WTC11 (cell line): ENCODE measurements at regions of chr2 and their contacts with region 1.

Region 1: GRCh38 chr2:27024188-27024587 is 8.6 kb upstream of the TMEM214 start:
- DNase-seq: peak; percentile 87
- ATAC-seq: peak; percentile 83
- H3K4me3 Mint-ChIP-seq: no peak overlapping the region
- H3K27ac Mint-ChIP-seq: no peak overlapping the region
- H3K4me1 Mint-ChIP-seq: peaks cover 6% of the 10 kb centered on the region
- H3K27me3 Mint-ChIP-seq: no peaks in the 10 kb centered on the region
- CTCF ChIP-seq: peak; percentile 44; the same call in 1 of the 2 replicates

Region 2: GRCh38 chr2:26757873-26758789 is 266.1 kb before region 1 on chr2:
- CTCF ChIA-PET with region 1: no interaction called
- POLR2A ChIA-PET with region 1: no interaction called
- DNase-seq: peak; percentile 36
- ATAC-seq: peak; percentile 50
- H3K4me3 Mint-ChIP-seq: no peak overlapping the region
- H3K27ac Mint-ChIP-seq: peak overlapping the region; percentile 25
- H3K4me1 Mint-ChIP-seq: peaks cover 39% of the 10 kb centered on the region
- H3K27me3 Mint-ChIP-seq: peaks cover 28% of the 10 kb centered on the region
- CTCF ChIP-seq: no peak

Region 3: DNA sequence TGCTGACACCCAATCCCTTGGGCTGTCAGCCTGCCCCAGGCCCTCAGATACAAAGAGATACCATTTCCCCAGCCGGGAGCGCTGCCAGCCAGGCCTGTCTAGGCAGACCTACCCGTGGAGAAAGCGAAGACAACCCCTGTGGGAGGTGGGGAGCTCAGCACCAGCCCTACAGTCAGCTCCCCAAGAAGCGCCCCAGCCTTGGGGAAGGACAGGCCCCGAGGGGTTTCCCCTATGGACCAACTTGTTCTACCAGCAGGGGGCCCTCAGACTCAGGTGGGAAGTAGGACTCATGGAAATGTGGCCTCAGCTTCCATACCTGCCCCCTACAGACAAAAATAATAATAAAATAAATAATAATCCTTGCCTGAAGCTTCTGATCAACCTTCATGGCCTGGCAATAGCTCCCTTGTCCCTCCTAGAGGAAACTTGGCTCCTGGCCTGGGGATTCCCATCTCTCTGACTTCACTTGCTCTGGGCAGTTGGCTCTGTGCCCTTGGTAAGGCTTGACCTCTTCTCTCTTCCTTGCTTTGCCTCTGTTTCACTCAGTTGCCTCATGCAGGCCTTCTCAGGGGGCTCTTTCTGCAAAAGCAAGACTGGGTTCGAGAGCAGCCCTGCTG is 253.1 kb before region 1 on chr2:
- CTCF ChIA-PET with region 1: no interaction called
- POLR2A ChIA-PET with region 1: no interaction called
- DNase-seq: peak; percentile 44
- ATAC-seq: peak; percentile 38
- H3K4me3 Mint-ChIP-seq: no peak overlapping the region
- H3K27ac Mint-ChIP-seq: no peak overlapping the region
- H3K4me1 Mint-ChIP-seq: no peaks in the 10 kb centered on the region
- H3K27me3 Mint-ChIP-seq: no peaks in the 10 kb centered on the region
- CTCF ChIP-seq: no peak

Region 4: DNA sequence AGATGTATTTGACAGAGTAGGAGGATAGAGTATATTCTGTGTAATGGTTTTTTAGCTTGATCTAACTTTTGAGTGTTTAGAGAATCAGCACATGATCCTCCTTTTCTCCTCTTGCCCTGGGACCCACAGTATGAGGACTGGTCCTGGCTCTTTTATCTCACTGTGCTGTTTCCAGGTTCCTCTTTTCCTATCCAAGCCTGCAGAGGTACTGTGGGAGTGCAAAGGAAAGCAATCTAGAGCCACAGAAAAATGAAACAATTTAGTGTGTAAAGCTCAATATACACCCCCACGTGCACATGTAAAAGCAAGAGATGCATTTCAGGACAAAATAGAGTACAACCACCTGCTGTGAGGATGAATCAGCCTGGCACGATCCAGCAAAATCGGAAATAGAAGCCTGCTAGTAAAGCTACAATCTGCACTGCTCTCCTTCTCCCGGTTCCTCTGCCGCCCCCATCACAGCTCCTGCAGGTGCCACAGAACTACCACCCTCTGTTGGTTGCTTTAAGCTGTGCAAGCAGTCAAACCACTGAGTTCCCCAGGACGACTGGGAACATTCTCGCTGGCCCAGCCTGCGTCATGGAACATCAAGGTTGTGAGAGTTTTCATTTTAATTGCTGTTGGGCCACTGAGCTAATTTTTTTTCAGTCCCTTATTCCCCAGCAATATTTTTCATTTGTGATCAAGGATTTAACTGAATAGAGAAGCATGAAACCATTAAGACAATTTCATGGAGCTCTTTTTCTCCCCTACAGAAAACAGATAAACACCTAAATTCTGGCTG is 101.6 kb before region 1 on chr2:
- CTCF ChIA-PET with region 1: interaction called, 18 read pairs
- POLR2A ChIA-PET with region 1: no interaction called
- DNase-seq: peak; percentile 73
- ATAC-seq: peak; percentile 90
- H3K4me3 Mint-ChIP-seq: no peak overlapping the region
- H3K27ac Mint-ChIP-seq: no peak overlapping the region
- H3K4me1 Mint-ChIP-seq: peaks cover 13% of the 10 kb centered on the region
- H3K27me3 Mint-ChIP-seq: no peaks in the 10 kb centered on the region
- CTCF ChIP-seq: peak; percentile 28; the same call in 1 of the 2 replicates

Region 5: DNA sequence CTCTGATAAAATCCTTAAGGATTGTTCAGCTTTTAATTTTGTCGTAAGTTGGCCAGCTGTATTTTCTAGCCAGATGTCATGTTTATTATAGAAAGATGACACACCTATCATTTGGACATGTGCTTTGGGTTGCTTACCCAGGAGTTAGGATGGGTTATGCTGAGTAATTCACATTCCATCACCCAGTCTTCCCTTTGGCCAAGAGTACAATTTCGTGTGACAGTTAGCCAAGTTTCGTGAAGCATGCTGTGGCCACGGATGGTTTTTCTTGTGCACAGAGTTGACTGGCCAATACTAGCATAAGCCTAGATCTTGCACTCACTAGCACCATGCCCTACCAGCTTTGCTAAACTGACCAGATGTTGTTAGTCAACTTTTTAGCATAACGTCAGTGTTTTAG is 48.0 kb before region 1 on chr2:
- CTCF ChIA-PET with region 1: interaction called, 12 read pairs
- POLR2A ChIA-PET with region 1: no interaction called
- DNase-seq: no peak
- ATAC-seq: no peak
- H3K4me3 Mint-ChIP-seq: no peak overlapping the region
- H3K27ac Mint-ChIP-seq: no peak overlapping the region
- H3K4me1 Mint-ChIP-seq: peaks cover 31% of the 10 kb centered on the region
- H3K27me3 Mint-ChIP-seq: peaks cover 14% of the 10 kb centered on the region
- CTCF ChIP-seq: no peak

Region 6: DNA sequence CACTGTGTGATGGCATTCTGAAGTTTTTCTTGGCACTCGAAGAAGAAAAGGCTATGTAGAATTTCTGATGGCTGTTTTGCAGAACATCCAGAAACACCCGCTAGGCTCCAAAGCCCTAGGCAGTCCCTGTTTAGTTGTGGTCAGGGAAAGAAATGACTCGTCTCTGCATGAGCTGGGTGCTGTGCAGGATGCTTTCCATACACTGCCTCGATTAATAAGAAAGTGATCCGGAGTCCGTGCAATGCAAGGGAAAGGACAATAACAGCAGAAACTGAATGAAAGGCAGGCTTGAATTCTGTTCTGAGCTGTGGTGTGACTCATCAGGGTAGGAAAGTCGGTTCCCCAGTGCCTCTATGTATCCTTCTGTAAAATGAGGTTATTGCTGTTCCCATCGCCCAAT is 35.0 kb before region 1 on chr2:
- CTCF ChIA-PET with region 1: interaction called, 12 read pairs
- POLR2A ChIA-PET with region 1: no interaction called
- DNase-seq: no peak
- ATAC-seq: no peak
- H3K4me3 Mint-ChIP-seq: no peak overlapping the region
- H3K27ac Mint-ChIP-seq: no peak overlapping the region
- H3K4me1 Mint-ChIP-seq: no peaks in the 10 kb centered on the region
- H3K27me3 Mint-ChIP-seq: no peaks in the 10 kb centered on the region
- CTCF ChIP-seq: no peak

Region 7: DNA sequence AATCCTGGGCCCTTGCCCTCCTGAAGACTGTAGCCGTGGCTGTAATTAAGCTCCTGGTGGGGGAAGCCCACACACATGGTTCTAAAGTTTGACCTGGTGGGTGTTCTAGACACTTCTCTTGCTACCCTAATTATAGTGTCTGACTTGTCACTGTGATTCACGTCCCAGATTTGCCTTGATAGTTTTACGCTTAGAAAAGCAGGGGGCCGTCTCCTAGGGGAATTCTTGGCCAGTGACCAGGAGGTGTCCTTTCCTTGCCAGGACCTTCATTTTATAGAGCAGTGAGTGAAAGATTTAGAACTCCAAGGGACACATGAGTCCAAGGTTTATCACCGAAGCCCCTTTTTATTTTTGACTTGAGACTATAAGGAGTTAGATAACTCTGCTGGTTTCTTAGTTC is 17.6 kb after region 1 on chr2:
- CTCF ChIA-PET with region 1: interaction called, 14 read pairs
- POLR2A ChIA-PET with region 1: no interaction called
- DNase-seq: no peak
- ATAC-seq: no peak
- H3K4me3 Mint-ChIP-seq: no peak overlapping the region
- H3K27ac Mint-ChIP-seq: no peak overlapping the region
- H3K4me1 Mint-ChIP-seq: no peaks in the 10 kb centered on the region
- H3K27me3 Mint-ChIP-seq: no peaks in the 10 kb centered on the region
- CTCF ChIP-seq: no peak

Region 8: DNA sequence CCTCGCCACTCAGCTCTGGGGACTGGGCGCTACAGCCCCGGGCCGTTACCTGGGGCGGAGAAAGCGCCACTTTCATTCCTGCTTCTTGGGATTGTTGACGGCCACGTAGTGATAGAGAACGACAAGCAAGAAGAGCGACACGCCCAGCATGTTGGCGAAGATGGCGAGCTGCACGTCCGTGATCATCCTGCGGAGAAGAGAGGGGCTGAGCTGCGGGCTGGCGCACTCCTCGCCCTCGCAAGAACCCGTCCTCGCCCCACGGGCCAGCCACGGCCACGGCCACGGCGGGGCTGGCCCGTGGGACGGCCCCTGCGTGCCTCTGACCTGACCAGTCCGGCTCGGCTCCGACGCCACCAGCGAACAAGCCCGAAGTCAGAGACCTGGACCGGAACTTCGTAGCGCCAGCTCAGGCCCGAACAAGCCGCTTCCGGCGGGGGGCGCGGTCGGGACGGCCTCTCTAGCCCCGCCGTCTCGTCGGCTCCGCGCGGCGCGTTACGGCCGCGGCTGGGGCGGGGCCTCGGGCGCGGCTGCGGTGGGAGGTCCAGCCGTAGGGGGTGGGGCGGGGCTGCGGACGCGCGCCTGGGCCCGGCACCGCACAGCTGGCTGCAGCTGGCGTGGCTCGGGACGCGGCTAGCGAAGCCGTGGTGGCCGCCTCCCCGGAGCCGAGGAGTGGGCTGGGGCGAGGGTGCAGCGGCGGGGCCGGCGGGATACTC is 47.2 kb after region 1 on chr2 and contains the start of gene OST4:
- CTCF ChIA-PET with region 1: interaction called, 17 read pairs
- POLR2A ChIA-PET with region 1: no interaction called
- DNase-seq: peak; percentile 90
- ATAC-seq: peak; percentile 89
- H3K4me3 Mint-ChIP-seq: peak within 1 kb of the TSS; percentile 98
- H3K27ac Mint-ChIP-seq: peak within 1 kb of the TSS; percentile 90
- H3K4me1 Mint-ChIP-seq: peaks cover 11% of the 10 kb centered on the region
- H3K27me3 Mint-ChIP-seq: peaks cover 3% of the 10 kb centered on the region
- CTCF ChIP-seq: no peak
- total RNA-seq, gene OST4: 210 to 239 TPM (median 226 TPM) in 3 replicates

Region 9: GRCh38 chr2:27303093-27304025 is 279.2 kb after region 1 on chr2:
- CTCF ChIA-PET with region 1: interaction called, 10 read pairs
- POLR2A ChIA-PET with region 1: no interaction called
- DNase-seq: no peak
- ATAC-seq: peak; percentile 21
- H3K4me3 Mint-ChIP-seq: peak overlapping the region; percentile 50
- H3K27ac Mint-ChIP-seq: no peak overlapping the region
- H3K4me1 Mint-ChIP-seq: peaks cover 8% of the 10 kb centered on the region; the same call in 1 of the 2 replicates
- H3K27me3 Mint-ChIP-seq: peaks cover 39% of the 10 kb centered on the region
- CTCF ChIP-seq: peak; percentile 92